A673 (cell line): ENCODE measurements at regions of chr1 and their contacts with region 1.

Region 1: DNA sequence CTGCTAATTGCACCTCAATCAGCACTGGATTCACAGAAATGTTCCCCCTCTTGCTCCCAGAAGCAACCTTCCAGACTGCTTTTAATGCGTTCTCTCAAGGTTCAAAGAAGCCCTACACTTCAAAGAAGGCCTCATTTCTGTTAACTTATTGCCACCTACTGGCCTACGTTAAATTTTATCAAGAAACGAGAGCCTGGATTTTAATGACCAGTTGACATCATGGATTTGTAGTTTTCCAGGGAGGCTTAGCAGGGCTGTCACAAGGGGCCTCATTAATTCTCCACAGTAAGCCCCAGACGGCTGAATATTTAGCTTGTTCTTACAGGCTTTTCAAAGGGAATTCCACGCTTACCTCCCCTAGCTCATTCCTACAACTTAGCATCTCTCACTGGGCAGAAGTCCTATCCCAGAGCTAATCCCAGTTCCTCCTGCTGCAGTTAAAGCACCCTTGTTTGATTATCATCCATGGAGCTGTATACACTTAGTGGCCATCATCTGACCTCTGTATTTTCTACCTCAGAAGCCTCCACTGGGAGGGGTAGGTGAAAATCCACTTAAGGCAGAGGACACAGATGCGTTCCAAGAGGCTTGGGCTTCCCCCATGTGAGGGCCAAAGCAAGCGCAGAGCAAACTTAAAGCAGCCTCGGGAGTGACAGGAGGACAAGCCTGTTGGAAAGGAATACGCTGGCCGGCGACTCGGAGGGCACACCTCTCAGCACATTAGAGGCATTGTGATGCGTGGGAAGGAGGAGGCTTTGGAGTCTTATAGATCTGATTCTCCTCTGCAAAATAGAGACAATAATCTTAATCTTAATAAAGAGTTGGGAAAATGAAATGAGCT is 32.2 kb upstream of the CYP4X1 start:
- DNase-seq: peak; percentile 51
- H3K4me3 ChIP-seq: no peak overlapping the region
- H3K27ac ChIP-seq: no peak overlapping the region
- H3K4me1 ChIP-seq: no peaks in the 10 kb centered on the region
- H3K27me3 ChIP-seq: peaks cover 23% of the 10 kb centered on the region
- CTCF ChIP-seq: peak; percentile 41; the same call in 1 of the 2 replicates

Region 2: GRCh38 chr1:46747683-46748288 is 243.5 kb before region 1 on chr1:
- CTCF ChIA-PET with region 1: no interaction called
- POLR2A ChIA-PET with region 1: no interaction called
- intact Hi-C with region 1: loop called (anchors 10 kb)
- DNase-seq: peak; percentile 67
- H3K4me3 ChIP-seq: no peak overlapping the region
- H3K27ac ChIP-seq: no peak overlapping the region
- H3K4me1 ChIP-seq: no peaks in the 10 kb centered on the region
- H3K27me3 ChIP-seq: peaks cover 55% of the 10 kb centered on the region
- CTCF ChIP-seq: peak; percentile 63

Region 3: DNA sequence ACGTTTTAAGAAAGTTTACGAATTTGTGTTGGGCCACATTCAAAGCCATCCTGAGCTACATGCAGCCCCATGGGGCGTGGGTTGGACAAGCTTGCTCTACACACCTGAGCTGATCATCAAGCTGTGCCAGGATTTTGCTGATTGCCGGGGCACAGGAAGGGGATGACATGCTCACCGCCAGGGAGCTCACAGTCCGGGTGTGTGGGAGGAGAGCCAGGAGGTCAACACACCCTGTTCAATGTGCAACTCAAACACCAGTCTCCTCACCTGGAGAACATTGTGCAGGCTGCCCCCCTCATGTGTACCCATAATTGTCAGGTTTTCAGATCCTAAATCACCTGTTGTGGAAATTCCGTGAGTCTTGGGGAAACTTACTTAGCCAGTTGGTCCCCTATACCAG is 51.0 kb before region 1 on chr1:
- CTCF ChIA-PET with region 1: no interaction called
- POLR2A ChIA-PET with region 1: no interaction called
- intact Hi-C with region 1: no loop called
- DNase-seq: no peak
- H3K4me3 ChIP-seq: no peak overlapping the region
- H3K27ac ChIP-seq: no peak overlapping the region
- H3K4me1 ChIP-seq: no peaks in the 10 kb centered on the region
- H3K27me3 ChIP-seq: peaks cover 7% of the 10 kb centered on the region
- CTCF ChIP-seq: no peak

Region 4: GRCh38 chr1:47161298-47162040 is 170.2 kb after region 1 on chr1:
- CTCF ChIA-PET with region 1: no interaction called
- POLR2A ChIA-PET with region 1: no interaction called
- intact Hi-C with region 1: no loop called
- DNase-seq: no peak
- H3K4me3 ChIP-seq: no peak overlapping the region
- H3K27ac ChIP-seq: no peak overlapping the region
- H3K4me1 ChIP-seq: no peaks in the 10 kb centered on the region
- H3K27me3 ChIP-seq: peaks cover 15% of the 10 kb centered on the region
- CTCF ChIP-seq: no peak